ENCODE measurements at regions of chr13 and their contacts with region 1.

Region 1: GRCh38 chr13:113724780-113725315 is 34.2 kb upstream of the TMEM255B start:
- DNase-seq: peak in 1 of 2 experiments; percentile 89
- H3K4me3 ChIP-seq: peak overlapping the region; percentile 27 to 60 (median 42)
- H3K27ac ChIP-seq: no peak overlapping the region
- H3K4me1 ChIP-seq: peaks cover 0 to 4% (median 3%) of the 10 kb centered on the region in 4 experiments; a peak in 2 of 7 replicates
- H3K27me3 ChIP-seq: peaks cover 0 to 5% (median under 1%) of the 10 kb centered on the region in 4 experiments; a peak in 3 of 7 replicates
- CTCF ChIP-seq: peak in 2 of 3 experiments; percentile 81 to 86; a peak in 3 of 4 replicates
- EP300 ChIP-seq: no peak
- POLR2A ChIP-seq: no peak
- RAD21 ChIP-seq: peak; percentile 58 to 77

Region 2: DNA sequence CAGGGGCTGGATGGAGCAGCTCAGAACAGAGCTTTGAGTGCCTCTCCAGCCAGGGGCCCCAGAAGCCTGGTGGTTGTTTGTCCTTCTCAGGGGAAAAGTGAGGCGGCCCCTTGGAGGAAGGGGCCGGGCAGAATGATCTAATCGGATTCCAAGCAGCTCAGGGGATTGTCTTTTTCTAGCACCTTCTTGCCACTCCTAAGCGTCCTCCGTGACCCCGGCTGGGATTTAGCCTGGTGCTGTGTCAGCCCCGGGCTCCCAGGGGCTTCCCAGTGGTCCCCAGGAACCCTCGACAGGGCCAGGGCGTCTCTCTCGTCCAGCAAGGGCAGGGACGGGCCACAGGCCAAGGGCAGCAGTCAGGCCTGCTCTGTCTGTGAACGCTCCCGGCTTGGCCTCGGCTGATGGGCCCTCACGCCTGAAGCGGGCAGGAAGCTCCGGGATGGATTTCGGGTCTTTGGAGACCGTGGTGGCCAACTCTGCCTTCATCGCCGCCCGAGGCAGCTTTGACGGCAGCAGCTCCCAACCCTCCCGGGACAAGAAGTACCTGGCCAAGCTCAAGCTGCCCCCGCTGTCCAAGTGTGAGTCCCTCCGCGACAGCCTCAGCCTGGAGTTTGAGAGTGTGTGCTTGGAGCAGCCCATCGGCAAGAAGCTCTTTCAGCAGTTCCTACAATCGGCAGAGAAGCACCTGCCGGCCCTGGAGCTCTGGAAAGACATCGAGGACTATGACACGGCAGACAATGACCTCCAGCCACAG is 57.7 kb before region 1 on chr13 and contains the start of gene GRK1:
- CTCF ChIA-PET with region 1: interaction called, 19 read pairs
- POLR2A ChIA-PET with region 1: interaction called, 4 read pairs
- DNase-seq: no peak
- H3K4me3 ChIP-seq: no peak within 1 kb of the TSS
- H3K27ac ChIP-seq: no peak within 1 kb of the TSS
- H3K4me1 ChIP-seq: peaks cover 0 to 2% (median 0%) of the 10 kb centered on the region in 4 experiments; a peak in 2 of 7 replicates
- H3K27me3 ChIP-seq: no peaks in the 10 kb centered on the region
- CTCF ChIP-seq: no peak
- EP300 ChIP-seq: no peak
- POLR2A ChIP-seq: no peak
- RAD21 ChIP-seq: no peak
- total RNA-seq, gene GRK1: 0.21 TPM in 1 of 2 replicates, not detected in the other

Region 3: DNA sequence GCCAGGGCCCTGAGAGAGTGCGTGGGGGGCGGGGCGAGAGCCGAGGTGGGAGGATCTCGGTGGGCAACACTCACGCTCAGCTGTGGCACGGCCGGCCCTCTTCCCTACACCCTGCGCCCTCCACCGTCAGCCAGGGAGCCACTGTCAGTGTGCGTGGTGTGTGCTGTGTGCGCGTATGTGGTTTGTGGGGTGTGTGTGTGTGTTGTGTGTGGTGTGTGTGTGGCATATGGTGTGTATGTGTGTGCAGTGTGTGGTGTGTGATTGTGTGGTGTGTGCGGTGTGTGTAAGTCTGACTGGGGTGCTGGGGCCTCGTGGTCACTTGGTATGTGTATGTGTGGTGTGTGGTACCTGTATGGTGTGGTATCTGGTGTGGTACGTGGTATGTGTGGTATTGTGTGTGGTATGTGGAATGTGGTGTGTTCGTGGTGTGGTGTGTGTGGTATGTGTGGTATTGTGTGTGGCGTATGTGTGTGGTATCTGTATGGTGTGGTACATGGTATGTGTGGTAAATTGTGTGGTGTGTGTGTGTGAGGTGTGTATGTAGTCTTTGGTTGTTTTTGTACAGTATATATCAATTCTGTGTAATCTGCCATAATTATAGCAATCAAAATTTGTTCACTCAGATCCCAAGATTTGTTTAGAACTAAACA is 52.7 kb before region 1 on chr13:
- CTCF ChIA-PET with region 1: interaction called, 19 read pairs
- POLR2A ChIA-PET with region 1: interaction called, 4 read pairs
- DNase-seq: no peak
- H3K4me3 ChIP-seq: no peak overlapping the region
- H3K27ac ChIP-seq: no peak overlapping the region
- H3K4me1 ChIP-seq: no peaks in the 10 kb centered on the region; a peak in 1 of 7 replicates
- H3K27me3 ChIP-seq: no peaks in the 10 kb centered on the region
- CTCF ChIP-seq: no peak
- EP300 ChIP-seq: no peak
- POLR2A ChIP-seq: no peak
- RAD21 ChIP-seq: no peak

Region 4: DNA sequence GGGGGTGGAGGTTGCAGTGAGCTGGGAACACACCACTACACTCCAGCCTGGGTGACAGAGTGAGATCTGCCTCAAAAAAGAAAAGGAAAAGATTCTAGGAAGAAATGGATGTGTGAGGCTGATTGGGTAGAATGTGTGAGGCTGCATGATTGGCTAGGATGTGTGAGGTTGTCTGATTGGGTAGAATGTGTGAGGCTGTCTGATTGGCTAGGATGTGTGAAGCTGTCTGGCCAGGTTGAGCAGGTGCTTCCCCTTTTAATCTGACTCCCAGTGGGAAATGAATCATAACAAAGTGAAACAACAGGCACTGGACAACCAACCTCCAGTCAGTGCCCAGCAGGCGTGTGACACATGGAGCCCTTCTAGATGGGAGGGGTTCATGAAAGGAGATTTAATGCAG is 234.3 kb after region 1 on chr13:
- CTCF ChIA-PET with region 1: no interaction called
- POLR2A ChIA-PET with region 1: no interaction called
- DNase-seq: no peak
- H3K4me3 ChIP-seq: no peak overlapping the region
- H3K27ac ChIP-seq: no peak overlapping the region
- H3K4me1 ChIP-seq: no peaks in the 10 kb centered on the region
- H3K27me3 ChIP-seq: no peaks in the 10 kb centered on the region
- CTCF ChIP-seq: no peak
- EP300 ChIP-seq: no peak
- POLR2A ChIP-seq: no peak
- RAD21 ChIP-seq: no peak

Measured in H1 (cell line).